ENCODE measurements at regions of chr21 and their contacts with region 1.

Region 1: DNA sequence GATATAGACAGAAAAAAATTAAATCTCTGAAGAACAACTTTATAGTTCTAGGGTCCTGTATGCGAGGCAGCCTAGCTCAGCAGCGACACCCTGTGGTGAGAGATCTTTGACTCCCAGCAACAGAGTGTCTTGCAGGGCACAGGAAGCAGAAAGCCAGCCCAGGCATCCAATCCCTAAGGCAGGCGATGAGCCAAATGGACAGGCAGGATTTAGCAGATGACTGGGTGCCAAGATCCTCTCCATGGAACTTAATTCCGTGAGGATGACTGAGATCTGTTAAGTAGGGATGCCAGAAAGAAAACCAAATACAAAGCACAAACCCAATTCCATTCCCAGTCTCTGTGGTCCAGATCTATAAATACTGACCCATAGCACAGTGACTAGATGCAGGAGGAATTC is 38.8 kb downstream of the HLCS start:
- DNase-seq: peak; percentile 60 to 83
- ATAC-seq: peak; percentile 62 to 75 (median 66)
- H3K4me3 ChIP-seq: no peak overlapping the region
- H3K4me3 Mint-ChIP-seq: no peak overlapping the region
- H3K27ac ChIP-seq: no peak overlapping the region
- H3K27ac Mint-ChIP-seq: no peak overlapping the region
- H3K4me1 ChIP-seq: no peaks in the 10 kb centered on the region
- H3K4me1 Mint-ChIP-seq: no peaks in the 10 kb centered on the region
- H3K27me3 ChIP-seq: no peaks in the 10 kb centered on the region
- H3K27me3 Mint-ChIP-seq: no peaks in the 10 kb centered on the region
- CTCF ChIP-seq: peak; percentile 88

Region 2: DNA sequence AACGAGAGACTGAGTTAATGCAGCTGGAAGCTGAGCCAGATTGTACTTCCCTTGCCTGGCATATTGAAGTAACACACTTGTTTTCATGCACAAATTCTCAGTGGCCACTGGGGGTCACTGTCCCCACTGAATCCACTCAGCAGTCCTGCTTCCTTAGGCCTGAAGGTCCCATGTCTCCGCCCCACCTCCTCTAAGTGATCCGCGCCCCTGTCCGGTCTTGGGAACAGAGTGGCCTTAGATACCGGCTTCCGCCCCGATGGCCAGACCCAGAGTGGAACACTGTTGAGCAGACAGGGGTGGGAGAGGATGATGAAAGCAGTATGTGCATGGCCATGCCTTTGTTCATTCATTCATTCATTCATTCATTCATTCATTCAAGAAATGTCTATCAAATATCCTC is 507.7 kb before region 1 on chr21:
- intact Hi-C with region 1: loop called (anchors 5 kb)
- DNase-seq: peak; percentile 51 to 56
- ATAC-seq: peak; percentile 60 to 85 (median 84)
- H3K4me3 ChIP-seq: no peak overlapping the region
- H3K4me3 Mint-ChIP-seq: no peak overlapping the region
- H3K27ac ChIP-seq: no peak overlapping the region
- H3K27ac Mint-ChIP-seq: peak overlapping the region in 1 of 2 donors; percentile 54
- H3K4me1 ChIP-seq: peaks cover 20% of the 10 kb centered on the region
- H3K4me1 Mint-ChIP-seq: peaks cover 24 to 33% of the 10 kb centered on the region in 2 donors
- H3K27me3 ChIP-seq: no peaks in the 10 kb centered on the region
- H3K27me3 Mint-ChIP-seq: no peaks in the 10 kb centered on the region
- CTCF ChIP-seq: peak; percentile 71

Region 3: GRCh38 chr21:36504067-36505058 is 423.4 kb before region 1 on chr21:
- intact Hi-C with region 1: loop called (anchors 1 kb)
- DNase-seq: peak in 1 of 2 donors; percentile 77
- ATAC-seq: peak; percentile 46 to 60 (median 54)
- H3K4me3 ChIP-seq: no peak overlapping the region
- H3K4me3 Mint-ChIP-seq: no peak overlapping the region
- H3K27ac ChIP-seq: no peak overlapping the region
- H3K27ac Mint-ChIP-seq: no peak overlapping the region
- H3K4me1 ChIP-seq: peaks cover 17% of the 10 kb centered on the region
- H3K4me1 Mint-ChIP-seq: peaks cover 25 to 31% of the 10 kb centered on the region in 2 donors
- H3K27me3 ChIP-seq: no peaks in the 10 kb centered on the region
- H3K27me3 Mint-ChIP-seq: no peaks in the 10 kb centered on the region
- CTCF ChIP-seq: peak; percentile 92

Region 4: GRCh38 chr21:36630485-36631206 is 297.1 kb before region 1 on chr21:
- intact Hi-C with region 1: loop called (anchors 1 kb)
- DNase-seq: peak; percentile 37 to 72
- ATAC-seq: peak in 2 of 3 donors; percentile 44 to 60
- H3K4me3 ChIP-seq: no peak overlapping the region
- H3K4me3 Mint-ChIP-seq: no peak overlapping the region
- H3K27ac ChIP-seq: no peak overlapping the region
- H3K27ac Mint-ChIP-seq: no peak overlapping the region
- H3K4me1 ChIP-seq: no peaks in the 10 kb centered on the region
- H3K4me1 Mint-ChIP-seq: no peaks in the 10 kb centered on the region
- H3K27me3 ChIP-seq: no peaks in the 10 kb centered on the region
- H3K27me3 Mint-ChIP-seq: peaks cover 3 to 34% of the 10 kb centered on the region in 2 donors
- CTCF ChIP-seq: peak; percentile 76

Region 5: DNA sequence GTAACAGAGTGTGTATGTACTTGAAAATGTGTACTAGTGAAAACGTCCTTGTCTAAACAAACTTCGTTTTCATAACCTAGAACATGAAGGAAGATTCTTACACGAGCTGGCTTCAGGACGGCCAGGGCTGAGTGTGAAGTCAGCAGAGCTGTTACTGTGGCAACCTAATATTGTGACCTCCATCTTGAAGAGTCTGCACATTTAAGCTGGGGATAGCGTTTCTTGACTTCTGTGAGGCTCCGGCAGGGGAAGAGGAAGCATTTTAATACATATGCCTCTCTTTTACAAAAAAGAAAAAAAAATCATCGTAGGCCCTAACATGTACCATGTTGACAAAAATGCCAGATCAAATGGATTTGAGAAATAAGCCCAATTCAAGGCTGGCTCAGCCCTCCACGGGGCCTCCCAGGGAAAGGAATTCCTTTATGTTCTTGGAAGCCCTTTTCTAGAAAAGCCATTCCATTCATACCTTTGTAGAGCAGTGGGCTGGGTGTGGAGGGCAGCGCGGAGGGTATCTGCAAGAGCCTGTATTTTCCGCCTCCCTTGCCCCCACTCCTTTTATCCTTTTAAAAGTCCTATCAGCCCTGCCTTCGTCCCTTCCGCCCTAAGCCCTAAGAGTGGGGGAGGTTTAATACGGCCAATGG is 177.7 kb before region 1 on chr21:
- intact Hi-C with region 1: loop called (anchors 10 kb)
- DNase-seq: no peak
- ATAC-seq: no peak
- H3K4me3 ChIP-seq: no peak overlapping the region
- H3K4me3 Mint-ChIP-seq: no peak overlapping the region
- H3K27ac ChIP-seq: no peak overlapping the region
- H3K27ac Mint-ChIP-seq: no peak overlapping the region
- H3K4me1 ChIP-seq: peaks cover 4% of the 10 kb centered on the region
- H3K4me1 Mint-ChIP-seq: peaks cover 10 to 14% of the 10 kb centered on the region in 2 donors
- H3K27me3 ChIP-seq: peaks cover 15% of the 10 kb centered on the region
- H3K27me3 Mint-ChIP-seq: peaks cover 22 to 31% of the 10 kb centered on the region in 2 donors
- CTCF ChIP-seq: no peak

Region 6: GRCh38 chr21:36881228-36881627 is 46.5 kb before region 1 on chr21:
- intact Hi-C with region 1: no loop called
- DNase-seq: no peak
- ATAC-seq: no peak
- H3K4me3 ChIP-seq: no peak overlapping the region
- H3K4me3 Mint-ChIP-seq: no peak overlapping the region
- H3K27ac ChIP-seq: no peak overlapping the region
- H3K27ac Mint-ChIP-seq: no peak overlapping the region
- H3K4me1 ChIP-seq: no peaks in the 10 kb centered on the region
- H3K4me1 Mint-ChIP-seq: peaks cover 0 to 6% of the 10 kb centered on the region in 2 donors
- H3K27me3 ChIP-seq: no peaks in the 10 kb centered on the region
- H3K27me3 Mint-ChIP-seq: no peaks in the 10 kb centered on the region
- CTCF ChIP-seq: no peak